ENCODE measurements at regions of chr6 and their contacts with region 1.

Region 1: GRCh38 chr6:147202516-147203312 is 1.5 kb upstream of the STXBP5 start:
- DNase-seq: peak; percentile 56
- ATAC-seq: peak; percentile 83
- H3K4me3 Mint-ChIP-seq: peak overlapping the region; percentile 93
- H3K27ac Mint-ChIP-seq: peak overlapping the region; percentile 96
- H3K4me1 Mint-ChIP-seq: peaks cover 28% of the 10 kb centered on the region
- H3K27me3 Mint-ChIP-seq: no peaks in the 10 kb centered on the region
- CTCF ChIP-seq: no peak

Region 2: DNA sequence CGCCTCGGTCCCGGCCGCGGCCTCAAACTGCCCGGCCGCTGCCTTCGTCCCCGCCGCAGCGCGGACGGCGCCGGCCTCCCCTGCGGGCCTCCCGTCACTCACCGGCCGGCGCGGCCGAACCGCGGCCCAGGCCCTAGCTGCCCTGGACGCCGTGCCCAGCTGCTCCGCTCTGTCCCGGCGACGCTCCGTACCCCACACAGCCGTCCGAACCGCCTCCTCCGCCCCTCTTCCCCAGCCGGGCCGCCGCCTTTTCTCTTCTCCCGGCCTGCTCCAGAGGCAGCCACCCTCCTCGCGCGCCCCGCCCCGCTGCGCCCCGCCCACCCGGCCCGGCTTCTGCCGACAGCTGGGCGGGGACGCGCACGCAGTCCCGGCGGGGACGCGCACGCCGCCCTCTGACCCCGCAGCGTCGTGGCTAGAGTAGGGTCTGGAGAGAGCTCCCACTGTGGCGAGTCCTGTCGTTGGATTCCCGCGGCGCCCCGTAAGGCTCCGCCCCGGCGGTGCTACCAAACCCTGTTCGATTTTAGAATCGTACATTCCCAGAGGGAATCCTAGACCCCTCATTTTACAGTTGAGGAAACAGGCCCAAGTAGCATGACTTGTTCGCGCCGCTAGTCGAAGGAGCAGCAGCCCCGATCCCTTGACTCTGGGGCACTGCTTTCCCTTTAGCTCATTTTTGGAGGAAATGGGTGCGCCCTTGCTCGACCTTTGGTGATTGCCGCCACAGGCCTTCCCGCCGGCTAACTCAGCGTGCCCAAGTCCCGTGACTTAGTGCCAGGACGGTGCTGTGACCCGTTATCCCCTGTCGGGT is 1388.0 kb before region 1 on chr6 and contains the start of gene FBXO30:
- CTCF ChIA-PET with region 1: no interaction called
- POLR2A ChIA-PET with region 1: no interaction called
- intact Hi-C with region 1: loop called (anchors 10 kb)
- DNase-seq: peak; percentile 97
- ATAC-seq: peak; percentile 91
- H3K4me3 Mint-ChIP-seq: peak within 1 kb of the TSS; percentile 95
- H3K27ac Mint-ChIP-seq: peak within 1 kb of the TSS; percentile 92
- H3K4me1 Mint-ChIP-seq: peaks cover 33% of the 10 kb centered on the region
- H3K27me3 Mint-ChIP-seq: no peaks in the 10 kb centered on the region
- CTCF ChIP-seq: no peak
- total RNA-seq, gene FBXO30: 5.8 and 6.1 TPM in 2 replicates

Region 3: GRCh38 chr6:146857180-146857979 is 345.3 kb before region 1 on chr6:
- CTCF ChIA-PET with region 1: no interaction called
- POLR2A ChIA-PET with region 1: no interaction called
- intact Hi-C with region 1: loop called (anchors 2 kb)
- DNase-seq: peak; percentile 61
- ATAC-seq: peak; percentile 91
- H3K4me3 Mint-ChIP-seq: peak overlapping the region; percentile 48
- H3K27ac Mint-ChIP-seq: peak overlapping the region; percentile 9
- H3K4me1 Mint-ChIP-seq: peaks cover 8% of the 10 kb centered on the region
- H3K27me3 Mint-ChIP-seq: peaks cover under 1% of the 10 kb centered on the region
- CTCF ChIP-seq: peak; percentile 74

Region 4: GRCh38 chr6:147222160-147222838 is 19.6 kb after region 1 on chr6:
- CTCF ChIA-PET with region 1: no interaction called
- POLR2A ChIA-PET with region 1: no interaction called
- intact Hi-C with region 1: loop called (anchors 1 kb)
- DNase-seq: no peak
- ATAC-seq: no peak
- H3K4me3 Mint-ChIP-seq: no peak overlapping the region
- H3K27ac Mint-ChIP-seq: no peak overlapping the region
- H3K4me1 Mint-ChIP-seq: peaks cover 14% of the 10 kb centered on the region
- H3K27me3 Mint-ChIP-seq: no peaks in the 10 kb centered on the region
- CTCF ChIP-seq: no peak

Region 5: DNA sequence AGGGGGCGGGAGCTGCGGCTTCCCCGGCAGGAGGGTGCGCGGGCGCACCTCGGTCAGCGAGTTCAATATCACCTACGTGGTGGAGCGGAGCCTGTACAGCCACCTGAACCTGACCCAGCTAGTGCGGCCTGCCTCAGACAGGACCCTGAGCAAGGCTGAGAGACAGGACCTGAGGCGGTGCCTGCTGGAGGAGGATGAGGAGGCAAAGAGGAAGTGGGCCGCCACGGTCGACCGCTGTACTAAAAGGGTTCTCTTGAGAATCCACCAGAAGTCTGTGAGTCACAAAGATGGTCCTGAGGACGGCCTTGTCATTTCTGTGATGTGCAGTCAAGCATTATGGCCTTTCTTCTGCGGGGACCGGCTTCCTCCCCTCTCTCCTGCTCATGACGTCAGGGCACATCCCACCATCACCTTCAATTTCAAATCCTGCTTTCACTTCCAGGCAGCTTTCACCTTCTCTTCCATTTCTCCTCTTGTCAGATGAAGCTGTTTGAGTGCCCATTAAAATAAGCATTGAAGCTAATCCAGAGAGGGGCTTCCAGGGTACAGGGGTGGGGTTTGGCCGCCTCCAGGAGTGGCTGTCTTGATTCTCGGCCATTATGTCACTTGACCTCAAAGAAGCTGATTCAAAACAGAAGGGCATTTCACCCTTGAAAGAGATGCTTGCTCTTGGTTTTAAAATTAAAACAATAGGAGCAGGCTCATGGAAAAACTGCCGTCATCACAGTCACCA is 1317.6 kb after region 1 on chr6:
- CTCF ChIA-PET with region 1: no interaction called
- POLR2A ChIA-PET with region 1: no interaction called
- intact Hi-C with region 1: loop called (anchors 5 kb)
- DNase-seq: peak; percentile 68
- ATAC-seq: peak; percentile 96
- H3K4me3 Mint-ChIP-seq: peak overlapping the region; percentile 64
- H3K27ac Mint-ChIP-seq: peak overlapping the region; percentile 82
- H3K4me1 Mint-ChIP-seq: peaks cover 66% of the 10 kb centered on the region
- H3K27me3 Mint-ChIP-seq: no peaks in the 10 kb centered on the region
- CTCF ChIP-seq: no peak

Measured in activated B cell treated with CpG ODN at 0.5 μM for 24 hours (primary cell).